A549 (cell line): ENCODE measurements at regions of chr20 and their contacts with region 1.

Region 1: GRCh38 chr20:728248-728944 is 39.9 kb downstream of the SLC52A3 start:
- DNase-seq: peak; percentile 80 to 84
- ATAC-seq: peak; percentile 91 to 97
- H3K4me3 ChIP-seq: peak overlapping the region; percentile 66
- H3K27ac ChIP-seq: peak overlapping the region; percentile 75 to 90
- H3K4me1 ChIP-seq: 0 out of 3 replicates have a peak, but pooled peaks cover 3% of the 10 kb centered on the region
- CTCF ChIP-seq: peak; percentile 89
- EP300 ChIP-seq: no peak
- POLR2A ChIP-seq: no peak
- RAD21 ChIP-seq: peak; percentile 87 to 89

Region 2: GRCh38 chr20:549722-550496 is 178.5 kb before region 1 on chr20:
- CTCF ChIA-PET with region 1: interaction called, 17 read pairs
- POLR2A ChIA-PET with region 1: no interaction called
- DNase-seq: no peak
- ATAC-seq: no peak; a peak in 1 of 6 replicates
- H3K4me3 ChIP-seq: no peak overlapping the region
- H3K27ac ChIP-seq: no peak overlapping the region
- H3K4me1 ChIP-seq: peaks cover 8% of the 10 kb centered on the region; the same call in 2 of the 3 replicates
- CTCF ChIP-seq: no peak
- EP300 ChIP-seq: no peak
- POLR2A ChIP-seq: no peak
- RAD21 ChIP-seq: no peak

Region 3: GRCh38 chr20:561437-562231 is 166.8 kb before region 1 on chr20:
- CTCF ChIA-PET with region 1: interaction called, 432 read pairs
- POLR2A ChIA-PET with region 1: no interaction called
- DNase-seq: peak; percentile 80 to 87
- ATAC-seq: peak; percentile 78 to 93
- H3K4me3 ChIP-seq: no peak overlapping the region
- H3K27ac ChIP-seq: no peak overlapping the region
- H3K4me1 ChIP-seq: no peaks in the 10 kb centered on the region
- CTCF ChIP-seq: peak; percentile 98
- EP300 ChIP-seq: no peak
- POLR2A ChIP-seq: no peak
- RAD21 ChIP-seq: peak; percentile 95 to 97

Region 4: GRCh38 chr20:653110-653589 is 75.2 kb before region 1 on chr20 and contains the start of gene SRXN1:
- CTCF ChIA-PET with region 1: interaction called, 59 read pairs
- POLR2A ChIA-PET with region 1: no interaction called
- DNase-seq: peak; percentile 93 to 98
- ATAC-seq: peak; percentile 83 to 86
- H3K4me3 ChIP-seq: peak within 1 kb of the TSS; percentile 87
- H3K27ac ChIP-seq: peak within 1 kb of the TSS; percentile 98
- H3K4me1 ChIP-seq: peaks cover 29% of the 10 kb centered on the region
- CTCF ChIP-seq: peak; percentile 93
- EP300 ChIP-seq: peak; percentile 52 to 81; a peak in 3 of 5 replicates
- POLR2A ChIP-seq: peak; percentile 93
- RAD21 ChIP-seq: peak; percentile 58 to 80
- polyA plus RNA-seq, gene SRXN1: 262 and 302 TPM in 2 replicates

Region 5: DNA sequence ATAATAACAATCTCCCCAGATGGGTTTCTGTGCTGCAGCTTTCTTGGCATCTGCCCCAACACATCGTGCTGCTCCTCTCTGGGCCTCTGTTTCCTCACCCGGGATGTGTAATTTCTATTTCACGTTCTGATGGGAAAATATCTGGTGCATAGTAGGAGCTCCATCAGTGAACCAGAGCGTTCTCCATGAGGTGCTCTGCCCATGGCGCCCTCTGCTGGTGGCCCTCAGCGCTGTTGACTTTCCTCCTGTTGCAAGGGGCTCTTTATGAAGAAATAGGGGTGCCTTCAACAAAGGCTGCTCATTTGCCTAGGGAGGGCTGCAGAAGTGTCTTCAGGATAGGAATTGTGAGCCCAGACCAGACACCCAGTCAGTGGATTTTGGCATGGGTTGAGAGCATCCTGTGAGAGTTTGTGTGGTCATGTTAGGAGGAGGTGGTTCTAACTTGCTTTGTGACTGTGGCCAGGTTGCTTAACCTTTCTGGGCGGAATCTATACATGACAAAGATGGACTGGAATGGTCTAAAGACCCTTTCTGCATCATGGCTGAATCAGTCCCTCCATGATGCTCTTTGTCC is 60.9 kb before region 1 on chr20:
- CTCF ChIA-PET with region 1: interaction called, 29 read pairs
- POLR2A ChIA-PET with region 1: no interaction called
- DNase-seq: peak; percentile 69 to 80
- ATAC-seq: peak in 1 of 2 experiments; percentile 78; a peak in 3 of 6 replicates
- H3K4me3 ChIP-seq: no peak overlapping the region
- H3K27ac ChIP-seq: 0 out of 6 replicates have a peak overlapping the region, but pooled peaks of 1 of the 2 experiments have one; percentile 6
- H3K4me1 ChIP-seq: peaks cover 28% of the 10 kb centered on the region; the same call in 2 of the 3 replicates
- CTCF ChIP-seq: peak; percentile 90
- EP300 ChIP-seq: no peak
- POLR2A ChIP-seq: no peak
- RAD21 ChIP-seq: peak; percentile 57 to 71

Region 6: GRCh38 chr20:688809-689212 is 39.6 kb before region 1 on chr20:
- CTCF ChIA-PET with region 1: interaction called, 14 read pairs
- POLR2A ChIA-PET with region 1: no interaction called
- DNase-seq: no peak
- ATAC-seq: peak; percentile 42 to 76; a peak in 3 of 6 replicates
- H3K4me3 ChIP-seq: no peak overlapping the region
- H3K27ac ChIP-seq: no peak overlapping the region
- H3K4me1 ChIP-seq: no peaks in the 10 kb centered on the region
- CTCF ChIP-seq: no peak
- EP300 ChIP-seq: no peak
- POLR2A ChIP-seq: no peak
- RAD21 ChIP-seq: no peak

Region 7: DNA sequence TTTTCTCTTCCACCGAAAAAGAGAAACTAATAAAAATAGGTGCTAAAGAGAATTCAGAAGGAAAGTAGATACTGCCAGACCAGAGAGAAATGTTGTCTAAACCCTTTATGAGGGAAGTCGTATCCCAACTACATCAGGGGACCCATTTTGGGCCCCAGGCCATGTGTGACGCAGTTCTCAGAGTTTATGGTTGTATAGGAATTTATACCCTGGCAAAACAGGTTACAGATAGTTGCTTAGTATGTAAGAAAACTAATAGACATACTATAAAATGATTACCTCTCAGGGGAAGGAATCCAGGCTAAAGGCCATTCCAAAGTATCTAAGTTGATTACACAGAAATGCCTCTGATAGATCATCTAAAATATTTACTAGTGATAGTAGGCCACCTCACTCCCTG is 68.5 kb after region 1 on chr20:
- CTCF ChIA-PET with region 1: no interaction called
- POLR2A ChIA-PET with region 1: no interaction called
- DNase-seq: no peak
- ATAC-seq: no peak
- H3K4me3 ChIP-seq: no peak overlapping the region
- H3K27ac ChIP-seq: no peak overlapping the region
- H3K4me1 ChIP-seq: no peaks in the 10 kb centered on the region
- CTCF ChIP-seq: no peak
- EP300 ChIP-seq: no peak
- POLR2A ChIP-seq: no peak
- RAD21 ChIP-seq: no peak